ENCODE measurements at regions of chr17 and their contacts with region 1.

Region 1: DNA sequence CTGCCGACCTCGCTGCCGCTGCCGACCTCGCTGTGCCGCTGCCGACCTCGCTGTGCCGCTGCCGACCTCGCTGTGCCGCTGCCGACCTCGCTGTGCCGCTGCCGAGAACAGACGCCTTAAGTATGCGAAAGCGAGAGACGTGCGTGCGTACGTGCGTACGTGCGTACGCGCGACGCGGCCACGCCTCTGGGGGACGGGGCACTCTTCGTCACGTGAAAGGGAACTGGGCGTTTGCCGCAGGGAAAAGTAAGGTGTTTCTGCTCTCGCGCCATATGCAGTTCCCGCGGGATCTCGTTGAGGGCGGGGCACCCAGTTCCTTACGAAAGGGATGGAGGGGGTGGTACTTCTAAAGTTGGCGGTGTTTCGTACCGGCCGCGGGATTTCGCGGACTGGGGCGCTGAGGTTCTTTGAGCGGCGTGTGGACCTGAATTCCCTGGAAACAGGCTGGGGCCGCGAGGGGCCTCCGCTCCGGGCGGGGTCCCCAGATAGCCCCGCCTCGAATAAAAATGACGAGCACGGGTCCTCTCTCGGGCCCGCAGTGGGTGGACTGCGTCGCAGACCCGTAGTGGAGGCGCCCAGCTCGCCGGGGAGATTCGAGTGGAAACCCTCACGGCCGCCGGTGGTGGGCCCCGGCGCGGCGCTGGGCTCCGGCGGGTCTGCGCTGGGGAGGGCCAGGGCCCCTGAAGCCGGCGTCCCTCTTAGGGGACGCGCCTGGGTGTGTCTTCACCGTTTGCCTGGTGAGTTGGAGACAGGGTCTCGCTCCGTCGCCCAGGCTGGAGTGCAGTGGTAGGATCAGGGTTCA is at the start of gene EIF4A3:
- DNase-seq: peak; percentile 92 to 99 (median 96)
- H3K4me3 ChIP-seq: peak within 1 kb of the TSS; percentile 74 to 99 (median 95)
- H3K27ac ChIP-seq: peak within 1 kb of the TSS; percentile 52 to 98 (median 91)
- H3K27me3 ChIP-seq: no peaks in the 10 kb centered on the region
- CTCF ChIP-seq: peak in 42 of 56 donors; percentile 6 to 61 (median 34)
- total RNA-seq, gene EIF4A3: 27.3 to 64.1 (median 38.4) TPM

Region 2: GRCh38 chr17:80101011-80101945 is 46.0 kb before region 1 on chr17 and contains the start of gene GAA:
- intact Hi-C with region 1: loop called (anchors 2 to 5 kb)
- DNase-seq: peak; percentile 48 to 91 (median 74)
- H3K4me3 ChIP-seq: peak within 1 kb of the TSS; percentile 66 to 99 (median 94)
- H3K27ac ChIP-seq: peak within 1 kb of the TSS in 58 of 59 donors; percentile 55 to 97 (median 90)
- H3K27me3 ChIP-seq: no peaks in the 10 kb centered on the region
- CTCF ChIP-seq: peak; percentile 51 to 97 (median 89)
- total RNA-seq, gene GAA: 35.8 to 101 (median 61.4) TPM

Region 3: DNA sequence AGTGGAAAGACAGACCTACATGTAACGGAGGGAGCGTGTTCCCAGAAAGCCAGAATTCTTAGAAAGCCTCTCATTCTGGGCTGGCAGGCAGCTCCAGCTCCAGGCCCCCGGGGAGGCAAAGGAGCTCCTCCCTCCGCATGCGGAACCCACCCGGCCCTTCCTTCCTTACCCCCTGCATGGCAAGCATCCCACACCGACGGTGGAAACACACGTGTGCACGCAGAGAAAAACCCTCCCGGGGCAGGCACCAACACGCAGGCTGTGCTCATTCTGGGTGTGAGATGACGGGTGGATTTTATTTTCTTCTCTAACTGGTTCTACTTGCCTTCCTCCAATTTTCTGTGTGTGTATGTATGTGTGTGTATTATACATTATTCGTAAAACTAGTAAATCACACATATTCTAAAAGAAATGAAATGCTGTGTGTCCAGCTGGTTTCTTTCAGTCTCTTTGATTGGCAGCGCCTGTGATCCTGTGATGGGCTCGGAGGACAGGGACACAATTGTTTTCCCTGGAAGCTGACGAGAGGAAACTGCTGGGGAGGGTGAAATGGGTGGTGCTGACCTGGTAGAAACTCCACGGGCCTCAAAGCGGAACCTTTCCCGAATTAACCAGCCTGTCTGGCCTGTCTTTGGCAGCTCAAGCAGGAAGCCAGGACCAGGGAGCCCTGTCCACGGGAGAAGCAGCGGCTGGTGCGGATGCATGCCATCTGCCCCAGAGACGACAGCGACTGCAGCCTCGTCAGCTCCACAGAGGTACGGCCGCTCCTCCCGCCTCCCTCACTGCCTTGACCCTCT is 44.8 kb after region 1 on chr17:
- intact Hi-C with region 1: loop called in 1 of 2 experiments (anchors 5 kb)
- DNase-seq: peak in 6 of 10 donors; percentile 50 to 69 (median 57)
- H3K4me3 ChIP-seq: peak overlapping the region in 54 of 59 donors; percentile 5 to 62 (median 40)
- H3K27ac ChIP-seq: peak overlapping the region in 10 of 59 donors; percentile 1 to 60 (median 27)
- H3K27me3 ChIP-seq: no peaks in the 10 kb centered on the region
- CTCF ChIP-seq: peak in 1 of 56 donors; percentile 24

Region 4: DNA sequence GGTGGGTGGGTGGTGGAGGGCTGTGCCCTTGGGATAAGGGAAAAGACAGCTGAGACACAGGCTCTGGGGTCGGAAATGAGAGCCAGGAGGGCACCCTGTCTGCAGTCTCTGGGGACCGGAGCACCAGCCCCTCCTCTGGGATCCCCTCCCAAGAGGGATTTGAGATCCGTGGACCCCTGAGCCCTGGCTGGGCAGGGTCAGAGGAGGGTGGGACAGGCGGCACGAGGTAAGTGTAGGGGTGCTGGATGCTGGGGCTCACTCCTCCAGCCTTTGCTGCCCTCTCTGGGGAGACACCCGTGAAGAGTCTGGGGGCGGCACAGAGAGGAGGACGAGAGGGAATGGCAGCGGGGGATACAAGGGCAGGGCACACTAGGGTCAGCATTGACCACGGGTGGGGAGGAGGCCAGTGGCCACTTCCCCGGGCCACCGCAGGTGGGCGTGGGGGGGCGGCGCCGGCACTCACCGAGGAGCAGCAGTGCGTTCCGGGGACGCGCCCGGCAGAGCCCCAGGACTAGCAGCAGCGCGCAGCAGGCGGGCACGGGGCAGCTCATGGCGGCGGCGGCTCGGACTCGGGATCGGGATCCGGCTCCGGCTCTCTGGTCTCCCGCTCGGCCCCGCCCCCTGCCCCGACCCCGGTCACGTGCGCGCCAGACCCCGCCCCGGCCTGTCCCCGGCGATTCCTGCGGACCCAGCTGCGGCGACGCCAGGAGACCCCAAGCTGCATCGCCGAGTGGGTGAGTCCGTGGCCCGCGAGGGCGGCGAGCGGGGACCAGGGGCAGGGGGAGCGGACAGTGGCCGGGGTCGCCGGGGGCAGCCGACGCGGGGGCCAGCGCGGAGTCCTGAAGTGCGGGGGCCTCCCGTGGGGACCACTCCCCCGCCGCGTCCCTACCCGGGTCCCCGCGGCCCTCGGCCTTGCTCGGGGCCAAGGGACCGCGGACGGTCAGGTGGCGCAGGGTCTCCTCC is 72.8 kb after region 1 on chr17 and contains the starts of genes SGSH and SLC26A11:
- intact Hi-C with region 1: loop called in 1 of 2 experiments (anchors 5 kb)
- DNase-seq: peak; percentile 54 to 87 (median 68)
- H3K4me3 ChIP-seq: peak within 1 kb of the TSS; percentile 59 to 99 (median 91)
- H3K27ac ChIP-seq: peak within 1 kb of the TSS in 53 of 59 donors; percentile 20 to 91 (median 70)
- H3K27me3 ChIP-seq: no peaks in the 10 kb centered on the region
- CTCF ChIP-seq: peak in 10 of 56 donors; percentile 3 to 28 (median 22)
- total RNA-seq, gene SGSH: 16.5 to 51.4 (median 26.9) TPM
- total RNA-seq, gene SLC26A11: 22.0 to 66.8 (median 39.7) TPM

Region 5: GRCh38 chr17:80263253-80264204 is 116.3 kb after region 1 on chr17:
- intact Hi-C with region 1: loop called (anchors 2 to 5 kb)
- DNase-seq: peak in 4 of 10 donors; percentile 40 to 65 (median 55)
- H3K4me3 ChIP-seq: peak overlapping the region in 54 of 59 donors; percentile 2 to 67 (median 36)
- H3K27ac ChIP-seq: peak overlapping the region in 49 of 59 donors; percentile 0 to 99 (median 57)
- H3K27me3 ChIP-seq: no peaks in the 10 kb centered on the region
- CTCF ChIP-seq: no peak

Measured in dorsolateral prefrontal cortex (tissue), 120 donors.